Left ventricle myocardium inferior (tissue), 1 donor: ENCODE measurements at regions of chr2 and their contacts with region 1.

Region 1: GRCh38 chr2:26942543-26943295 is 27.7 kb upstream of the MAPRE3 start:
- DNase-seq: peak; percentile 57
- H3K4me3 ChIP-seq: no peak overlapping the region
- H3K27ac ChIP-seq: no peak overlapping the region
- H3K4me1 ChIP-seq: peaks cover 10% of the 10 kb centered on the region
- H3K27me3 ChIP-seq: peaks cover 58% of the 10 kb centered on the region
- CTCF ChIP-seq: peak; percentile 85

Region 2: DNA sequence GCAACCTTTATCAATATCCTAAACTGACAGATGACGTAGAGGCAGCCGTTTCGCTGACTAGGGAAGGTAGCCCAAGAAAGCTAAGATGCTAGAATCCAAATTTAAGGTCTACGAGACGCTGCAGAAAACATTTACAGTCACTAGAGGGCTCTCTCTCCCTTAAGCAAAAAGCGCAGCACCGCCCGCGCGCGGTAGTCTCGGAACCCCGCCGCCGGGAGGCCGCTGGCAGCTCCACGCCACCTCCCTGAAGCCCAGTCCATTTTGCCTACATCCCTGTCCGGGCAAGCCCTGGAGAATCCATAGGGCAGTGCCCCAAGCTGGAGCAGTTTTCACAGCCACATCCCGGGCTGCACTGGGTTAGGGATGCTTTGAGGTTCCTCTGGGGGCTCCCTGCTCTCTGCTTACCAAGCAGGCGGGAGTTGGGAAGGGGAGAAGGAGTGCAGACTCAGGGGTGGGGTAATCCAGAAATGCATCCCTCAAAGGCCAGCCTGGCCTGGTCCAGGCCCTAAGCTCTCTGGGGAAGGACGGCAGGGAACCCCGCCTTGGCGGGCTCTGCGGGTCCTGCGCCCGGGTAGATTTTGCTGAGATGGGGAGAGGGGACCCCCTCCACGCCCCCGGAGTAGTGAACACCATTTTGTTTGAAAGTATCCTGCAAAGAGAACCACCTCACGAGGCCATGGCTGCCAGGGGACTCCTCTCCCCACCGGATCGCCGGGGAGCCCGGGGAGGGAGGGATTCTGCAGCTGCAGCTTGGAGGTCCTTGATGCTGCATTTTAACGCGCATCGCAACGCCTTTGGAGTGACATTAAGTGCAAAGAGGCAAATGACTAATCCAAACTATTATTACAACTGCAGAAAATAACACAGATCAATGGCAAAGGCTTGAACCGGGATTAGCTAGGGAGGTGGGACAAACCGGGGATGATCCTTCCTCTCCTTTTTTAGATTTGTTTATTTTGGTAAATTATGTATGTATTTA is 96.1 kb before region 1 on chr2:
- intact Hi-C with region 1: loop called (anchors 5 kb)
- DNase-seq: peak; percentile 60
- H3K4me3 ChIP-seq: peak overlapping the region; percentile 27
- H3K27ac ChIP-seq: no peak overlapping the region
- H3K4me1 ChIP-seq: peaks cover 39% of the 10 kb centered on the region
- H3K27me3 ChIP-seq: peaks cover 100% of the 10 kb centered on the region
- CTCF ChIP-seq: peak; percentile 86

Region 3: GRCh38 chr2:27003857-27004256 is 61.1 kb after region 1 on chr2:
- intact Hi-C with region 1: no loop called
- DNase-seq: no peak
- H3K4me3 ChIP-seq: no peak overlapping the region
- H3K27ac ChIP-seq: no peak overlapping the region
- H3K4me1 ChIP-seq: peaks cover 23% of the 10 kb centered on the region
- H3K27me3 ChIP-seq: no peaks in the 10 kb centered on the region
- CTCF ChIP-seq: no peak